Ovary (tissue), 10 donors: ENCODE measurements at regions of chr6 and their contacts with region 1.

Region 1: DNA sequence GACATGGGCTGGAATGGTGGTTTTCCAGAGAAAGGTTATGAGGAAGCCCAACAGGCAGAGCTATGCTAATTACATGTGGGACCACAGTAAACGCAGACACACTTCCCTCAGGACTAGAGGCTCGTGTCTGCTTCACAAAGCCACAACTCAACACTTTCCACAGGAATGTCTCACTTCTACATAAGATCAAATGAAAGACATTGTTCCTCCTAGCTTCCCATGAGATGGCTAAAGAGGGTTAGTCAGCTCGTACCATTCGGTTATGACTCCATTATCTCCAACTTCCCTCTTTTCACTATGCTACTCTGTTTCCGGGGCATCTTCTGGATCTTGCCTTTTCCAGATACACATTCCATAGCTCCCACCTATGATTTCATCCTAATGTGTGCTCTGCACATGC is 29.1 kb upstream of the ZC3H12D start:
- DNase-seq: no peak
- H3K4me3 ChIP-seq: no peak overlapping the region
- H3K27ac ChIP-seq: no peak overlapping the region
- H3K4me1 ChIP-seq: no peaks in the 10 kb centered on the region
- H3K27me3 ChIP-seq: no peaks in the 10 kb centered on the region
- CTCF ChIP-seq: no peak
- EP300 ChIP-seq: no peak
- POLR2A ChIP-seq: no peak

Region 2: GRCh38 chr6:148559848-148560433 is 954.0 kb before region 1 on chr6:
- intact Hi-C with region 1: loop called in 1 of 4 experiments (anchors 10 kb)
- DNase-seq: peak; percentile 78 to 89 (median 83)
- H3K4me3 ChIP-seq: peak overlapping the region; percentile 47
- H3K27ac ChIP-seq: no peak overlapping the region
- H3K4me1 ChIP-seq: peaks cover 1% of the 10 kb centered on the region
- H3K27me3 ChIP-seq: no peaks in the 10 kb centered on the region
- CTCF ChIP-seq: peak; percentile 90 to 93 (median 91)
- EP300 ChIP-seq: no peak
- POLR2A ChIP-seq: no peak

Region 3: DNA sequence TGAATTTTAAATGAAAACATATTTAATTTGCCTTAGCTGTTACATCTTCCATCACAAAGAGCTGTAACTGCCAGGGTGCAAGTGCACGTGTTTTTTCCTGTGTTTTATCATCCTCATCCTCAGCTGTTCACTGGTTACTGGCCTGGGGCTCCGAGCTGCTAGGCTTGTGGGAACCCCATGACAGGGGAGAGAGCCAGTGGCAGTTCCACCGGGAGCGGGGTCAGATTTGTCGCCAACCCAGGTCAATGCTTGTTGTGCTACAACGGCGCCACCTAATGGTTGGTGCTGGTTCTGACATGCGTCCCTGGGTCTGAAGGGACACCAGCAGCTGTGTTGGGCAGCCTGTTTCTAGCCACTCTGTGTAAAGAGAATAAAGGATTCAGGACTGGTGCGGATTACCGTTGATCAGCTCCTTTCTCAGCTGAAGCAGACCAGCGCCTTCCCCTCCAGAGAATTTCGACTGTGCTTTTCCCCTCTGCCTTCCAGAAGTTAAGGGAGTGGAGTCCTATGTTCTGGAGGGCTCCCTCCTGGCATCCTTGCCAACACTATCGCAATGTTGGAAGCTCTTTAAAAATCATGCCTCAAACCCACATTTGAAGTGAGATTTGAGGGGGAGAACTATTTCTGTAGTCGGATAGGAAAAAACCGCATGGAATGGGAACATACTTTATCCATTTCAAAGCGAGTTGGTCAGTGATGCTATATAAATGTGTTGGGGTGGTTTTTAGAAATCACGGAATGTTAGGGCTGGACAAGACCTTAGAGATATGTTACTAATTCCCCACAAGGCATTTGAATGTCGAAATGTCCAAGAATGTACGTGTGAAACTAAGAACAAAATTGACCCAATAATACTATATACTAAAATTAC is 81.8 kb before region 1 on chr6:
- intact Hi-C with region 1: loop called in 2 of 4 experiments (anchors 5 kb)
- DNase-seq: peak; percentile 82 to 91 (median 90)
- H3K4me3 ChIP-seq: no peak overlapping the region
- H3K27ac ChIP-seq: no peak overlapping the region
- H3K4me1 ChIP-seq: peaks cover 2% of the 10 kb centered on the region
- H3K27me3 ChIP-seq: no peaks in the 10 kb centered on the region
- CTCF ChIP-seq: peak; percentile 85 to 92 (median 89)
- EP300 ChIP-seq: no peak
- POLR2A ChIP-seq: no peak